ENCODE measurements at regions of chr15 and their contacts with region 1.

Region 1: DNA sequence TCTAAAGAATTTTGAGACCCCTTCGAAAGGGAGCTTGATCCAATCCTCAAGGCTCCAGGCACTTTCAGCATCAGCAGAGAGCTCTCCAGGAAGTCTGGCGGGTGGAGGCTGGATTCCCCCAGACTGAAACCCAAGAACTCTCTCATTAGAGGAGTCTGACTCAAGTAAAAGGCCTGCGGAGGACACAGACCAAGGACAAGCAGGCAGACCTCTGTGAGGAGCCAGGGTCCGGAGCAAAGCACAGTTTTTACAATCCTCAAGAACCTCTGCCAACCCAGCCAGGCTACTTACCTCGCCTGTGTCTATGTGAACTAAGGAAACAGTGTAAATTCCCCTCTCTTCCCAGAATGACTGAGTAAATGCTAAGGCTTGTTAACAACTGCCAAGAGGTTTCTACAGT is 86.2 kb downstream of the FBN1 start:
- DNase-seq: peak; percentile 48 to 51
- H3K4me3 ChIP-seq: no peak overlapping the region
- H3K27ac ChIP-seq: peak overlapping the region; percentile 67 to 71
- H3K4me1 ChIP-seq: peaks cover 0 to 3% of the 10 kb centered on the region in 2 donors
- H3K27me3 ChIP-seq: no peaks in the 10 kb centered on the region
- CTCF ChIP-seq: no peak
- POLR2A ChIP-seq: no peak

Region 2: GRCh38 chr15:48367483-48367882 is 191.8 kb before region 1 on chr15:
- intact Hi-C with region 1: loop called (anchors 5 kb)
- DNase-seq: no peak
- H3K4me3 ChIP-seq: no peak overlapping the region
- H3K27ac ChIP-seq: peak overlapping the region in 1 of 2 donors; percentile 33
- H3K4me1 ChIP-seq: no peaks in the 10 kb centered on the region
- H3K27me3 ChIP-seq: no peaks in the 10 kb centered on the region
- CTCF ChIP-seq: no peak
- POLR2A ChIP-seq: no peak